ENCODE measurements at regions of chr1 and their contacts with region 1.

Region 1: DNA sequence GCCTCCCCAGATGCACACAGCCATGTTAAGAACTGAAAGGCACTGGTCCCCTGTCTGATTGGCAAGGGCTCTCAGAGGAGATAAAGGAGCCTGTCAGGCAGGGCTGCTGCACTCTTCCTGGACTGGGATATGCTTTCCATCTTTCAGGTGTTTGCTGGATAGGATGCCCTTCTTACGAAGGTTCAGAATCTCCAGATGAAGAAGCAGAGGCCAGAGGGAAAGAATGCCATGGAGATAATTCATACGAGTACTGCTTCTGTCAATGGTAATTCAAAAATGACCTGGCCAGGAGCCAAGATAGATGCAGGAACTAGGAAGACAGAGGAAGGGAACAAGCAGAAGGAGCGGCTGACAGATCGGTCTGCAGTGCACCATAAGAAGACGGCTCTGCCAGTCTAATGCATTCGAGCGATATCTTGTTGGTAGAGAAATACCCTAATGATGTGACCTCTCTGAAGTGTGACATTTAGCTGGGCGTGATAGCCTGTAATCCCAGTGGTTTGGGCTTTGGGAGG is 16.6 kb upstream of the ATP2B4 start:
- DNase-seq: no peak
- H3K4me3 Mint-ChIP-seq: no peak overlapping the region
- H3K27ac Mint-ChIP-seq: peak overlapping the region; percentile 53
- H3K4me1 Mint-ChIP-seq: peaks cover 58% of the 10 kb centered on the region
- H3K27me3 Mint-ChIP-seq: no peaks in the 10 kb centered on the region

Region 2: DNA sequence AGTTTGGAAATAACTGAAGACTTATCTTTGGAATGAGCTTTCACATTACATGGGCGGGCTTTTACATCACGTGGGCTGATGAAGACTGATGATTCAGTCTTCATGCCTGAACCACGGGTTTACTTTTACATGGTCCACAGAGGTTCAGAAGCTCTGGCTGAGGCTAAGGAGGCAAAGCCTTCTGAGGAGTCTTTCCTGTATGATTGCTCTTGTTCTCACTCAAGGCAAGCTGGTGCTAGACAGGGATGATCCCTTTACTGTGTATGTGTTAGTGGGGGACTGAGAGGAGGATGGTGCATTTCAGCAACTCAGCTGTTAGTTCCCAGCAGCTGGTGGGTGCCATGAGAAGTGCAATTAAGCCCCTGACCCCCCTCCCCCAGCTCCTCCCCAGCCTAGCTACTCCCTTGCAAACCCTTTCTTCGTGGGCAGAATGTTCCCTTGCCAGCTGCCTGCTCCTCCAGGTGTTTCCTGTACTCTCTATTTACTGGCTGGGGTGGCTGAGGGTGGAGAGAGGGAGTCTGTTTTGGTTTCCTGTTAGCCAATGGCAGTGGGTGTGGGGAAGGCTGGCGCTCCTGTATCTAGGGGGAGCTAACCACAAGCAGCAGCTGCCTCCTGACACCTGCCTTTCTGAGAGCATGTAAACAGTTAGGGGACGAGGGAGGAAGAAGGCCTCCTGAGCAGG is 289.3 kb before region 1 on chr1:
- CTCF ChIA-PET with region 1: no interaction called
- POLR2A ChIA-PET with region 1: no interaction called
- intact Hi-C with region 1: loop called (anchors 5 kb)
- DNase-seq: peak; percentile 78
- H3K4me3 Mint-ChIP-seq: peak overlapping the region; percentile 22
- H3K27ac Mint-ChIP-seq: peak overlapping the region; percentile 88
- H3K4me1 Mint-ChIP-seq: peaks cover 75% of the 10 kb centered on the region
- H3K27me3 Mint-ChIP-seq: no peaks in the 10 kb centered on the region

Region 3: GRCh38 chr1:203512830-203513611 is 97.0 kb before region 1 on chr1:
- CTCF ChIA-PET with region 1: no interaction called
- POLR2A ChIA-PET with region 1: no interaction called
- intact Hi-C with region 1: loop called (anchors 5 kb)
- DNase-seq: peak; percentile 72
- H3K4me3 Mint-ChIP-seq: peak overlapping the region; percentile 8
- H3K27ac Mint-ChIP-seq: peak overlapping the region; percentile 72
- H3K4me1 Mint-ChIP-seq: peaks cover 24% of the 10 kb centered on the region
- H3K27me3 Mint-ChIP-seq: no peaks in the 10 kb centered on the region

Measured in activated CD4-positive, alpha-beta memory T cell treated with anti-CD3 and anti-CD28 coated beads for 36 hours (primary cell).